ENCODE measurements at regions of chr12 and their contacts with region 1.

Region 1: GRCh38 chr12:39103552-39104165 is 198.3 kb upstream of the CPNE8 start:
- DNase-seq: peak; percentile 66
- H3K4me3 ChIP-seq: no peak overlapping the region
- H3K27ac ChIP-seq: no peak overlapping the region
- H3K4me1 ChIP-seq: peaks cover 8% of the 10 kb centered on the region
- H3K27me3 ChIP-seq: no peaks in the 10 kb centered on the region
- CTCF ChIP-seq: peak; percentile 75 to 76

Region 2: GRCh38 chr12:38053655-38054464 is 1049.8 kb before region 1 on chr12:
- CTCF ChIA-PET with region 1: no interaction called
- dilution Hi-C with region 1: no loop called
- in situ Hi-C with region 1: no loop called
- intact Hi-C with region 1: loop called (anchors 10 kb)
- DNase-seq: peak; percentile 49
- H3K4me3 ChIP-seq: no peak overlapping the region
- H3K27ac ChIP-seq: no peak overlapping the region
- H3K4me1 ChIP-seq: no peaks in the 10 kb centered on the region
- H3K27me3 ChIP-seq: no peaks in the 10 kb centered on the region
- CTCF ChIP-seq: no peak

Region 3: DNA sequence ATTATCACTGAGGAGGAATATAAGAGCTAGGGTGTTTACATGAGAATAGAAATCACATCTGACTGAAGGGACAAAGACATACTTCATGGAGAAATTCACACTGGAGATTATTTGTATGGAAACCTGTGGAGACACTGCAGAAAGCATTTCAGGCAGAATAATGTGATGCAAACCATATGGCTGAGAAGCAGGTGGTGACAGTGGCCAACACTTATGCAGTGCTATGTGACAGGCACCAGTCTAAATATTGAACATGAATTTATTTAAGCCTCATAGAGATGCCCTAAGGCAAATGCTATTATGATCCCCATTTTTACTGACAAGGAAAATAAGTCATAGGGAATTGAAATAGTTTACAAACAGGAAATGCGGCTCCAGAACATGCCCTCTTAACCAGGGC is 770.8 kb before region 1 on chr12:
- CTCF ChIA-PET with region 1: no interaction called
- dilution Hi-C with region 1: no loop called
- in situ Hi-C with region 1: loop called (anchors 10 to 25 kb)
- intact Hi-C with region 1: loop called (anchors 2 kb)
- DNase-seq: no peak
- H3K4me3 ChIP-seq: no peak overlapping the region
- H3K27ac ChIP-seq: no peak overlapping the region
- H3K4me1 ChIP-seq: no peaks in the 10 kb centered on the region
- H3K27me3 ChIP-seq: no peaks in the 10 kb centered on the region
- CTCF ChIP-seq: no peak

Region 4: DNA sequence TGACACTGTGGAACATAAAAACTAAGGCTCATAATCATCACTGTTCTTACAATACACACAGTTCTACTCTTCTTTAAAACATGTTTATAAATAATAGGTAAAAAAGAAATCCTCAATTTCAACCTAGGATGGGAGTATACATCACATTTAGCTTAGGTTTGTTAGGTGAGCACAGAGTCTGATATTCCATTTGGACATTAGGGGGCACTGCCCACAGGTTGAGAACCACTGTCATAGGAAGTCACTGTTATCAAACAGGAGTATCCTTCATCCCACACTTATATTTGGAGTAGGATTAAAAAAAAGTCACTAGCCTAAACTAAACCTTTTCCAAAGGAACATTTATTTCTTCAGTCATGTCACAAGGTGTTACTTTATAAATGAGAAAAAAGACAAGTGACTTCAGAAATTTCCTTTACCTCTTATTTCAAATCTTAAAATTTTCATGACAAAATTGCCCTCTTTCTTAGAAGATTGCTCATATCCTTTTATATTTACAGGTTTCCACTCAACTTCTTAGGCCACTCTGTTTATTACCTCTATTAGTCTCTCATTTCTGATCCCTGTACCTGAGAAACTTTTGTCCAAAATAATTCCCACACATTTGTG is 438.9 kb before region 1 on chr12:
- CTCF ChIA-PET with region 1: no interaction called
- dilution Hi-C with region 1: no loop called
- in situ Hi-C with region 1: no loop called
- intact Hi-C with region 1: loop called (anchors 2 kb)
- DNase-seq: peak; percentile 24
- H3K4me3 ChIP-seq: no peak overlapping the region
- H3K27ac ChIP-seq: no peak overlapping the region
- H3K4me1 ChIP-seq: no peaks in the 10 kb centered on the region
- H3K27me3 ChIP-seq: no peaks in the 10 kb centered on the region
- CTCF ChIP-seq: peak; percentile 63 to 73

Region 5: DNA sequence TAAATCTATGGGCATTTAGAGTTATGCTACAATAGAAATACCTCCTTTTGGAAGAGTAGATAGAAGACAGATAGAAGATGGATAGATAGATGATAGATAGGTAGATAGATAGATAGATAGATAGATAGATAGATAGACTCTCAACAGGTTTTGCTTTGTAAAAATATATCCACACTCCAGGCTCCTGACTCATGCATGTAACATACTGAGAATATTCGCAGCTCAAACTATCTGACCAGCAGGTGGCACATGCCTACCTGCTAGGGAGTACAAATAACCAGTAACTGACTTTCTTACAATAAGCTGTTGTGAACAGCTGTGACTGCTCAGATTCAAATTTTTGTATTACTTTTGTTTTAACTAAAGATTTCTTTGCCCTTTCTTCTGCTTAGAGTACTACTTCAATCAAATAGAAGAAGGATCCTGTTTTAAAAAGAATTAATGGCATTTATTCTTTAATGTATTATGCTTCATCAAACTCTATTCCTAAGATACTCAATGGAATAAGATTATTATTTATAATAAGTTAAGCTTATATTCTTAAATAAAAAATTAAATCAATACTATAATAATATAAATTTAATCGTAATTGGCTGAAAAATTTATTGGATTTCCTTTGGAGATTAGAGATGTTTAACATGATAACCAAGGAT is 182.5 kb before region 1 on chr12:
- CTCF ChIA-PET with region 1: interaction called, 31 read pairs
- dilution Hi-C with region 1: no loop called
- in situ Hi-C with region 1: loop called in 1 of 2 experiments (anchors 5 kb)
- intact Hi-C with region 1: loop called (anchors 1 kb)
- DNase-seq: peak; percentile 73
- H3K4me3 ChIP-seq: no peak overlapping the region
- H3K27ac ChIP-seq: no peak overlapping the region
- H3K4me1 ChIP-seq: peaks cover 5% of the 10 kb centered on the region
- H3K27me3 ChIP-seq: no peaks in the 10 kb centered on the region
- CTCF ChIP-seq: peak; percentile 79 to 81

Region 6: DNA sequence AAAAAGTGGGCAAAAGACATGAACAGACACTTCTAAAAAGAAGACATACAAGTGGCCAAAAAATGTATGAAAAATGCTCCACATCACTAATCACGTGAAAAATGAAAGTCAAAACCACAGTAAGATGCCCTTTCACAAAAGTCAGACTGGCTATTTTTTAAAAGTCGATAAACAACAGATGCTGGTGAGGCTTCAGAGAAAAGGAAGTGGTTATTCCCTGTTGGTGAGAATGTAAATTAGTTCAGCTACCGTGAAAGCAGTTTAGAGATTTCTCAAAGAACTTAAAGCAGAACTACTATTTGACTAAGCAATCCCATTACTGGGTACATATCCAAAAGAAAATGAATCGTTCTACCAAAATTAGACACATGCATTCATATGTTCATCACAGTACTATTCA is 102.3 kb after region 1 on chr12:
- CTCF ChIA-PET with region 1: no interaction called
- dilution Hi-C with region 1: no loop called
- in situ Hi-C with region 1: no loop called
- intact Hi-C with region 1: no loop called
- DNase-seq: no peak
- H3K4me3 ChIP-seq: no peak overlapping the region
- H3K27ac ChIP-seq: no peak overlapping the region
- H3K4me1 ChIP-seq: no peaks in the 10 kb centered on the region
- H3K27me3 ChIP-seq: no peaks in the 10 kb centered on the region
- CTCF ChIP-seq: no peak

Region 7: GRCh38 chr12:39692258-39692853 is 588.7 kb after region 1 on chr12:
- CTCF ChIA-PET with region 1: no interaction called
- dilution Hi-C with region 1: no loop called
- in situ Hi-C with region 1: no loop called
- intact Hi-C with region 1: no loop called
- DNase-seq: no peak
- H3K4me3 ChIP-seq: no peak overlapping the region
- H3K27ac ChIP-seq: no peak overlapping the region
- H3K4me1 ChIP-seq: no peaks in the 10 kb centered on the region
- H3K27me3 ChIP-seq: no peaks in the 10 kb centered on the region
- CTCF ChIP-seq: peak; percentile 28 to 34

Measured in mammary epithelial cell (primary cell).